B cell (primary cell): ENCODE measurements at regions of chr6 and their contacts with region 1.

Region 1: GRCh38 chr6:157841211-157841840 is 18.3 kb downstream of the SNX9 start:
- DNase-seq: peak; percentile 63
- ATAC-seq: peak; percentile 95
- H3K4me3 ChIP-seq: no peak overlapping the region
- H3K4me3 Mint-ChIP-seq: peak overlapping the region; percentile 37
- H3K27ac ChIP-seq: no peak overlapping the region
- H3K27ac Mint-ChIP-seq: peak overlapping the region; percentile 26
- H3K4me1 ChIP-seq: peaks cover 46 to 51% of the 10 kb centered on the region in 2 donors
- H3K4me1 Mint-ChIP-seq: peaks cover 75% of the 10 kb centered on the region
- H3K27me3 ChIP-seq: no peaks in the 10 kb centered on the region
- H3K27me3 Mint-ChIP-seq: no peaks in the 10 kb centered on the region
- CTCF ChIP-seq: no peak

Region 2: GRCh38 chr6:157181647-157182046 is 659.7 kb before region 1 on chr6:
- CTCF ChIA-PET with region 1: no interaction called
- POLR2A ChIA-PET with region 1: no interaction called
- intact Hi-C with region 1: no loop called
- DNase-seq: no peak
- ATAC-seq: no peak
- H3K4me3 ChIP-seq: no peak overlapping the region
- H3K4me3 Mint-ChIP-seq: no peak overlapping the region
- H3K27ac ChIP-seq: no peak overlapping the region
- H3K27ac Mint-ChIP-seq: no peak overlapping the region
- H3K4me1 ChIP-seq: no peaks in the 10 kb centered on the region
- H3K4me1 Mint-ChIP-seq: peaks cover 2% of the 10 kb centered on the region
- H3K27me3 ChIP-seq: no peaks in the 10 kb centered on the region
- H3K27me3 Mint-ChIP-seq: no peaks in the 10 kb centered on the region
- CTCF ChIP-seq: no peak

Region 3: DNA sequence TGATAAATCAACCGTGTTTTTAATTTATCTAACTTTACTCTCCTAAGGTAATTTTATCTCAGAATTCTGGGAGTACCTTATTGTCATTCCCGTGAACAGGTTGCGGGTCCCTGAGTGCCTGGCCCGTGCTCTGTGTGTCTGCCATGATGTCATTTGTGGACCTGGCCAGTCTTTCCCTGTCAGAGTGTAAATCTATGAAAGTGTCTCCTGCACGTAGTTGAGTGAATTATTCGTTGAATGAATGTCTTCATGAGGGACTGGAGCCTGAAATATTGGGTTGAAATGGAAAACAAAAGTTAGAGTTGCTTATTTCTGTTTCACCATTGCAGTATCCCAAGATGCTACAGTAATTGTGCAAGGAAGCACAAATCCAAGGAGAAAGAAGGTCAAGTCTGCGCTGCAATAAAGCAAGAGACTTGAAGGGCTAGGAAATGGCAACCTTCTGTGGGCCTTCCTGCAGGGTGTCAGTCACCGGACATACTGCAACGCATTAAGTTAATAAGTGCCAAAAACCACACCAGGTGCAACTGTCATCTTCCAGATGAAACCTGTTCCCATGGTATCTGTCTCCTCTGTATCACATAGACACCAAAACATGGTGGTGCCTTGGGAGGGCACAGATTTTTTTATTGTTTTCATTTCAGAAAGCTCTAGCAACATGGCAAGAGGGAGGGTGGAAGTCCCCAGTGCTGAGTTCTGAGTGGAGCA is 324.9 kb before region 1 on chr6:
- CTCF ChIA-PET with region 1: no interaction called
- POLR2A ChIA-PET with region 1: interaction called, 10 read pairs
- intact Hi-C with region 1: no loop called
- DNase-seq: no peak
- ATAC-seq: no peak
- H3K4me3 ChIP-seq: no peak overlapping the region
- H3K4me3 Mint-ChIP-seq: no peak overlapping the region
- H3K27ac ChIP-seq: no peak overlapping the region
- H3K27ac Mint-ChIP-seq: no peak overlapping the region
- H3K4me1 ChIP-seq: peaks cover 0 to 6% of the 10 kb centered on the region in 2 donors
- H3K4me1 Mint-ChIP-seq: peaks cover 21% of the 10 kb centered on the region
- H3K27me3 ChIP-seq: no peaks in the 10 kb centered on the region
- H3K27me3 Mint-ChIP-seq: no peaks in the 10 kb centered on the region
- CTCF ChIP-seq: no peak

Region 4: GRCh38 chr6:157823001-157823527 is 18.3 kb before region 1 on chr6 and contains the start of gene SNX9:
- CTCF ChIA-PET with region 1: interaction called, 4 read pairs
- POLR2A ChIA-PET with region 1: no interaction called
- intact Hi-C with region 1: loop called (anchors 2 kb)
- DNase-seq: peak; percentile 85
- ATAC-seq: peak; percentile 67
- H3K4me3 ChIP-seq: peak within 1 kb of the TSS; percentile 62 to 91 (median 86)
- H3K4me3 Mint-ChIP-seq: peak within 1 kb of the TSS; percentile 94
- H3K27ac ChIP-seq: peak within 1 kb of the TSS; percentile 74 to 95
- H3K27ac Mint-ChIP-seq: peak within 1 kb of the TSS; percentile 97
- H3K4me1 ChIP-seq: peaks cover 16 to 17% of the 10 kb centered on the region in 2 donors
- H3K4me1 Mint-ChIP-seq: peaks cover 43% of the 10 kb centered on the region
- H3K27me3 ChIP-seq: no peaks in the 10 kb centered on the region
- H3K27me3 Mint-ChIP-seq: no peaks in the 10 kb centered on the region
- CTCF ChIP-seq: no peak
- total RNA-seq, gene SNX9: 50.7 and 53.0 TPM in 2 replicates

Region 5: GRCh38 chr6:157830354-157831017 is 10.8 kb before region 1 on chr6:
- CTCF ChIA-PET with region 1: interaction called, 4 read pairs
- POLR2A ChIA-PET with region 1: interaction called, 3 read pairs
- intact Hi-C with region 1: loop called (anchors 1 kb)
- DNase-seq: peak; percentile 35
- ATAC-seq: peak; percentile 43
- H3K4me3 ChIP-seq: no peak overlapping the region
- H3K4me3 Mint-ChIP-seq: peak overlapping the region; percentile 59
- H3K27ac ChIP-seq: no peak overlapping the region
- H3K27ac Mint-ChIP-seq: peak overlapping the region; percentile 77
- H3K4me1 ChIP-seq: peaks cover 25 to 30% of the 10 kb centered on the region in 2 donors
- H3K4me1 Mint-ChIP-seq: peaks cover 58% of the 10 kb centered on the region
- H3K27me3 ChIP-seq: no peaks in the 10 kb centered on the region
- H3K27me3 Mint-ChIP-seq: no peaks in the 10 kb centered on the region
- CTCF ChIP-seq: no peak